Activated CD4-positive, alpha-beta memory T cell treated with anti-CD3 and anti-CD28 coated beads, Interleukin-2, amount 10 ng/mL, durations not matched to agents 7 days and 5 days (primary cell): ENCODE measurements at regions of chr2 and their contacts with region 1.

Region 1: DNA sequence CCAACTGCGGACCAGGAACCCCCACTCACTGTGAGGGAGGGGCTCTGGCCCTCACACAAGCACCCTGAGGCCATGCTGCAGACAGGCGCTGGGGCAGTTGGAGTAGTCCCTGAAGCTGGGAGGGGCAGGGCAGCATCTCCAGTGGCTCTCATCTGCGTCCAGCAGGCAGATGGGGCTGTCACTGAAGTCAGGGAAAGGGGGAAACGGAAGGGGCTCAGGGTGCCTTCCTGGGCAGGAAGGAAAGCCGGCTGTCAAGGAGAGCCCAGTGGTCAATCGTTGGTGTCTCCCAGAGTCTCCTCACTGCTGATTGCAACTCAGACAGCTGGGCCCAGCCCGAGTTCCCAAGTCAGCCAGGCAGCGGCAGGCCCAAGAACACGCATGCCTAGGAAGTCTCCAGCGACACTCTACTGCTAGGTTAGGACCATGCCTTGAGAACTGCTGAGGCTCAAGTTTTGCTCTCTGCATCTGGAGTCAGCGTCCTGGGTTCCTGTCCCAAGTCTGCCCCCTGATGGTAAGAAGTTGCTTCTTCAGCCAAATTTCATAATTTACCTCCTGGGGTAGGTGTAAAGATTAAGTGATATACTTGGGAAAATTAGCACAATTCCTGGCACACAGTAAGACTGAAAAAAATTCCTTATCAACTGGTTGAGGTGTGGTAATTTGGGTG is 27.5 kb upstream of the NMUR1 start:
- DNase-seq: peak; percentile 74
- H3K4me3 Mint-ChIP-seq: no peak overlapping the region
- H3K27ac Mint-ChIP-seq: no peak overlapping the region
- H3K4me1 Mint-ChIP-seq: peaks cover 33% of the 10 kb centered on the region
- H3K27me3 Mint-ChIP-seq: peaks cover 8% of the 10 kb centered on the region

Region 2: GRCh38 chr2:231482806-231483391 is 74.8 kb before region 1 on chr2:
- CTCF ChIA-PET with region 1: interaction called, 14 read pairs
- POLR2A ChIA-PET with region 1: no interaction called
- DNase-seq: peak; percentile 78
- H3K4me3 Mint-ChIP-seq: peak overlapping the region; percentile 76
- H3K27ac Mint-ChIP-seq: peak overlapping the region; percentile 83
- H3K4me1 Mint-ChIP-seq: peaks cover 23% of the 10 kb centered on the region
- H3K27me3 Mint-ChIP-seq: no peaks in the 10 kb centered on the region

Region 3: GRCh38 chr2:231514103-231514950 is 43.4 kb before region 1 on chr2:
- CTCF ChIA-PET with region 1: interaction called, 45 read pairs
- POLR2A ChIA-PET with region 1: interaction called, 3 read pairs
- DNase-seq: peak; percentile 99
- H3K4me3 Mint-ChIP-seq: peak overlapping the region; percentile 88
- H3K27ac Mint-ChIP-seq: peak overlapping the region; percentile 86
- H3K4me1 Mint-ChIP-seq: peaks cover 29% of the 10 kb centered on the region
- H3K27me3 Mint-ChIP-seq: peaks cover 14% of the 10 kb centered on the region

Region 4: GRCh38 chr2:231522799-231523180 is 34.9 kb before region 1 on chr2:
- CTCF ChIA-PET with region 1: interaction called, 45 read pairs
- POLR2A ChIA-PET with region 1: interaction called, 3 read pairs
- DNase-seq: no peak
- H3K4me3 Mint-ChIP-seq: no peak overlapping the region
- H3K27ac Mint-ChIP-seq: no peak overlapping the region
- H3K4me1 Mint-ChIP-seq: peaks cover 57% of the 10 kb centered on the region
- H3K27me3 Mint-ChIP-seq: peaks cover 23% of the 10 kb centered on the region

Region 5: GRCh38 chr2:231530091-231531011 is 27.4 kb before region 1 on chr2 and contains the start of gene NMUR1:
- CTCF ChIA-PET with region 1: interaction called, 18 read pairs
- POLR2A ChIA-PET with region 1: interaction called, 6 read pairs
- DNase-seq: peak; percentile 83
- H3K4me3 Mint-ChIP-seq: peak within 1 kb of the TSS; percentile 37
- H3K27ac Mint-ChIP-seq: no peak within 1 kb of the TSS
- H3K4me1 Mint-ChIP-seq: peaks cover 40% of the 10 kb centered on the region
- H3K27me3 Mint-ChIP-seq: peaks cover 46% of the 10 kb centered on the region
- total RNA-seq, gene NMUR1: 3.4 to 3.9 TPM

Region 6: DNA sequence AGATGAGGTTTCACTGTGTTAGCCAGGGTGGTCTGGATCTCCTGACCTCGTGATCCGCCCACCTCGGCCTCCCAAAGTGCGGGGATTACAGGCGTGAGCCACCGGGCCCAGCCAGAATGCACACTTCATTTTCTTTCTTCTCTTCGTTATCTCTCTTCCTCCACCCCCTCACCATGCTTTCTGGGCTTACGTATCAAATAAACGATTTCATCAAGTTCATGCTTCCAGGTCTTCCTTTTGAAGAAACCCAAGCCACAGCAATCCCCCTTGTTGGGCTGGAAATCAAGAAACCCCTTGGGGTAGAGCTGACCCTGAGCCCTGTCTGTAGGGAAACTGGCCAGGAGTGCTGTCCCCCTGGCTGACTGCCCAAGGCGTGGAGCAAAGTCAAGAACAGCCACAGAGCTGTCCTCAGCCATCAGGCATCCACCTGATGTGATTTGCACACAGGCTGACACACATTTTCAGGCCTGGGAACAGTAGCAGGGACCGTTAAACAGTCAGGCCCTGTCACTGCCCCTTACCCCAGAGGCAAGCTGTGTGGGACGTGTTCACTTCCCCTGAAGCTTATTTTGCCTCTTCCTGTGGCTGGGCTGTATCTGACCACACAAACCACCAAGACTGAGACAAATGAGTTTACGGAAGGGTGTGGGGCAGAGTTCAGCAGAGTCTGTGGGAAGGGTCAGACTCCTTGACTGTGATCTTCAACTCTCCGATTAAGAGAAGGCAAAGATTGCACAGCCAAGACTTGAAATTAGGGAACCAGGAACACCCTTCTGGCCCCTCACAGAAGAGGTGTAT is 12.4 kb before region 1 on chr2:
- CTCF ChIA-PET with region 1: interaction called, 11 read pairs
- POLR2A ChIA-PET with region 1: interaction called, 7 read pairs
- DNase-seq: peak; percentile 90
- H3K4me3 Mint-ChIP-seq: peak overlapping the region; percentile 56
- H3K27ac Mint-ChIP-seq: peak overlapping the region; percentile 99
- H3K4me1 Mint-ChIP-seq: peaks cover 69% of the 10 kb centered on the region
- H3K27me3 Mint-ChIP-seq: peaks cover 10% of the 10 kb centered on the region

Region 7: DNA sequence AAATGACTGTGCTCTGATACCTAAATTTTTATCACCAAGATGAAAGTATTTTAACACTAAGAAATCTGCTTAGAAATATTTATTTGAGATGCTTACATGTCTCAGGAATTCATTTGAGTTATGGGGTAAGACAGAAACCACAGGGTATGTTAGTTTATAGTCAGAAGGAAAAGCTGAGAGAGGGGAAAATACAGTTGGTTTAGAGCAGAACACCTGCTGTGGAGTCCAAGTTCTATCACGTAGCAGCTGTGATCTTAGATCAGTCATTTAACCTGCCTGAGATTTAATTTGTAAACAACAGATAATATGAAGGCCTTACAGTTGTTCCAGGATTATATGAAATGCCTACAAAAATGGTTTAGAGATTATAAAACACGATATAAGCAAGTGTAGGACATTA is 194.4 kb after region 1 on chr2:
- CTCF ChIA-PET with region 1: no interaction called
- POLR2A ChIA-PET with region 1: no interaction called
- DNase-seq: no peak
- H3K4me3 Mint-ChIP-seq: no peak overlapping the region
- H3K27ac Mint-ChIP-seq: no peak overlapping the region
- H3K4me1 Mint-ChIP-seq: no peaks in the 10 kb centered on the region
- H3K27me3 Mint-ChIP-seq: no peaks in the 10 kb centered on the region